ENCODE measurements at regions of chr7 and their contacts with region 1.

Region 1: GRCh38 chr7:106176414-106177299 is 64.5 kb upstream of the SYPL1 start:
- DNase-seq: peak; percentile 82
- ATAC-seq: peak; percentile 95
- H3K4me3 Mint-ChIP-seq: no peak overlapping the region
- H3K27ac Mint-ChIP-seq: no peak overlapping the region
- H3K4me1 Mint-ChIP-seq: peaks cover 7% of the 10 kb centered on the region
- H3K27me3 Mint-ChIP-seq: peaks cover 13% of the 10 kb centered on the region
- CTCF ChIP-seq: peak; percentile 94

Region 2: GRCh38 chr7:106193661-106194060 is 17.0 kb after region 1 on chr7:
- CTCF ChIA-PET with region 1: interaction called, 11 read pairs
- POLR2A ChIA-PET with region 1: no interaction called
- intact Hi-C with region 1: no loop called
- DNase-seq: no peak
- ATAC-seq: no peak
- H3K4me3 Mint-ChIP-seq: no peak overlapping the region
- H3K27ac Mint-ChIP-seq: no peak overlapping the region
- H3K4me1 Mint-ChIP-seq: no peaks in the 10 kb centered on the region
- H3K27me3 Mint-ChIP-seq: peaks cover 19% of the 10 kb centered on the region
- CTCF ChIP-seq: no peak

Region 3: GRCh38 chr7:106216517-106216922 is 39.9 kb after region 1 on chr7:
- CTCF ChIA-PET with region 1: interaction called, 16 read pairs
- POLR2A ChIA-PET with region 1: no interaction called
- intact Hi-C with region 1: no loop called
- DNase-seq: no peak
- ATAC-seq: no peak
- H3K4me3 Mint-ChIP-seq: no peak overlapping the region
- H3K27ac Mint-ChIP-seq: no peak overlapping the region
- H3K4me1 Mint-ChIP-seq: peaks cover 2% of the 10 kb centered on the region
- H3K27me3 Mint-ChIP-seq: peaks cover 12% of the 10 kb centered on the region
- CTCF ChIP-seq: no peak

Region 4: DNA sequence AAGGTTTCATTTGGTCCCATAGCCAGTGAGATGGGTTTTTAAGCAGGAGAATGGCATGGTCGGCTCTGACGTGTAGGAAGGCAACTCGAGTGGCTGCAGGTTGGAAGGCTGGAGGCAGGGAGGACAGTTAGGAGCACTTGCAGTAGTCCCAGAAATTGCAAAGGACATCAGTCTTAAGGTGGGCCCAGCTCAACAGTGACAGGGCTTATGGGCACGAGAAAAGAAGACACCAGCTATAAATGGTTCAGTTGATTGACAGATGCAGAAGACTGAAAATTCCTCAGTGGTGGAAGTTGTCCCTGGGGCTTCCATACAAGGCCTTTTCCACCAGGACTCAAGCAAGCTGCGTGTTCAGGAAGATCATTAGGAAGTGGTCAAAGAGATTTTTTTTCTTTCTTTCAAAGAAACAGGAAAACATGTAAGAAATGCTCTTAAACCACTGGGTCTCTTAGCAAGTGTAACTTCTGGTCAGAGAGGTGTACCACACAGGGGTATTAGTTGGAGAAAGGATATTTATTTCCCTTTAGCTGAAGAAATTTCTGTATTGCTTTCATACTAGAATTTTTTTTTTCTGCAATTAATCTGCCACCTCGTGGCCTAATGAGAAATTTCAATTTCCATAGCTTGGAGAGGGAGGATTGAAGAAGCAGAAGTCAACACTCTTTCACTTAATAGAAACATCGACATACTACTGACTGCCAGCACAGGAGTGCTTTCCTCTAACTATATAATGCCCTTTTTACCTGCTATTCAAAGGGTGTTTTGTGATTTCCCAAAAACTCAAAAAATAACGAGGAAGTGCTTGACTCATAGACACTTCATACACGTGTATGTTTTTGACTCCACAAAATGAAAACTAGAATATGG is 285.6 kb after region 1 on chr7:
- CTCF ChIA-PET with region 1: interaction called, 73 read pairs
- POLR2A ChIA-PET with region 1: interaction called, 3 read pairs
- intact Hi-C with region 1: loop called (anchors 2 kb)
- DNase-seq: peak; percentile 13
- ATAC-seq: peak; percentile 69
- H3K4me3 Mint-ChIP-seq: peak overlapping the region; percentile 25
- H3K27ac Mint-ChIP-seq: peak overlapping the region; percentile 63
- H3K4me1 Mint-ChIP-seq: peaks cover 25% of the 10 kb centered on the region
- H3K27me3 Mint-ChIP-seq: no peaks in the 10 kb centered on the region
- CTCF ChIP-seq: peak; percentile 79

Region 5: DNA sequence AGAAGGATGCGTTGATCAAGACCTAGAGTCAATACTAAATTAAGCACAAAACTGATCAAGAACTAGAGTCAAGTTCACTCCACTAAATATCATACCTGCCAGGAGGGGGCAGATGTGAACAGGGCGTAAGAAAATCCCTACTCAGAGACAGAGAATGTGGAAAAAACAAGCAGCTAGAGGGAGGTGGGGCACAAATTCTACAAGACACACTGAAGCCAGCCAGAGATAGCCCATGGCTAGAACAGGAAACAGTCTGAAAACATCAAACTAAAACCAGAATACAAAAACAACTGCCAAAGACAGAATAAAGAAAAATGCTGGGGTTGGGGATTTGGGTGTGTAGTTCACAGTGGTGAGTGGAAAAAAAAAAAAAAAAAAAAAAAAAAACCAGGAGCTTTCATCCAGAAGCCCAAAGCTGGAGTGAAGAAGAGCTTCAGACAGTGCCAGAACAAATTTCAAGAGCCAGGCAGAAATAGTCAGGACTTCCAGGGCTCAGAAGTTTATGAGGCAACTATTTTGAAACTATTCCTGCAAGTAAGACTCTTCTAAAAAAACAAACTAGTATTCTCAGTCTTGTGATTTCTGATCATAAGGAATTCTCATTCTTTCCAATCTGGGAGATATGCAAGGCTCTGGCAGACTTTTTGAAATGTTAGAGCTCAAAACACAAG is 366.0 kb after region 1 on chr7:
- CTCF ChIA-PET with region 1: interaction called, 4 read pairs
- POLR2A ChIA-PET with region 1: no interaction called
- intact Hi-C with region 1: loop called (anchors 10 kb)
- DNase-seq: peak; percentile 70
- ATAC-seq: peak; percentile 86
- H3K4me3 Mint-ChIP-seq: no peak overlapping the region
- H3K27ac Mint-ChIP-seq: no peak overlapping the region
- H3K4me1 Mint-ChIP-seq: peaks cover 8% of the 10 kb centered on the region
- H3K27me3 Mint-ChIP-seq: peaks cover 3% of the 10 kb centered on the region
- CTCF ChIP-seq: peak; percentile 60

Region 6: GRCh38 chr7:106736508-106737201 is 560.0 kb after region 1 on chr7:
- CTCF ChIA-PET with region 1: interaction called, 21 read pairs
- POLR2A ChIA-PET with region 1: no interaction called
- intact Hi-C with region 1: loop called (anchors 5 kb)
- DNase-seq: peak; percentile 56
- ATAC-seq: peak; percentile 94
- H3K4me3 Mint-ChIP-seq: no peak overlapping the region
- H3K27ac Mint-ChIP-seq: peak overlapping the region; percentile 63
- H3K4me1 Mint-ChIP-seq: peaks cover 28% of the 10 kb centered on the region
- H3K27me3 Mint-ChIP-seq: no peaks in the 10 kb centered on the region
- CTCF ChIP-seq: peak; percentile 74

Measured in activated CD8-positive, alpha-beta T cell treated with anti-CD3 and anti-CD28 coated beads for 36 hours (primary cell).